ENCODE measurements at regions of chr7 and their contacts with region 1.

Region 1: GRCh38 chr7:1579481-1580421 is 9.9 kb upstream of the PSMG3 start:
- DNase-seq: peak; percentile 69

Region 2: DNA sequence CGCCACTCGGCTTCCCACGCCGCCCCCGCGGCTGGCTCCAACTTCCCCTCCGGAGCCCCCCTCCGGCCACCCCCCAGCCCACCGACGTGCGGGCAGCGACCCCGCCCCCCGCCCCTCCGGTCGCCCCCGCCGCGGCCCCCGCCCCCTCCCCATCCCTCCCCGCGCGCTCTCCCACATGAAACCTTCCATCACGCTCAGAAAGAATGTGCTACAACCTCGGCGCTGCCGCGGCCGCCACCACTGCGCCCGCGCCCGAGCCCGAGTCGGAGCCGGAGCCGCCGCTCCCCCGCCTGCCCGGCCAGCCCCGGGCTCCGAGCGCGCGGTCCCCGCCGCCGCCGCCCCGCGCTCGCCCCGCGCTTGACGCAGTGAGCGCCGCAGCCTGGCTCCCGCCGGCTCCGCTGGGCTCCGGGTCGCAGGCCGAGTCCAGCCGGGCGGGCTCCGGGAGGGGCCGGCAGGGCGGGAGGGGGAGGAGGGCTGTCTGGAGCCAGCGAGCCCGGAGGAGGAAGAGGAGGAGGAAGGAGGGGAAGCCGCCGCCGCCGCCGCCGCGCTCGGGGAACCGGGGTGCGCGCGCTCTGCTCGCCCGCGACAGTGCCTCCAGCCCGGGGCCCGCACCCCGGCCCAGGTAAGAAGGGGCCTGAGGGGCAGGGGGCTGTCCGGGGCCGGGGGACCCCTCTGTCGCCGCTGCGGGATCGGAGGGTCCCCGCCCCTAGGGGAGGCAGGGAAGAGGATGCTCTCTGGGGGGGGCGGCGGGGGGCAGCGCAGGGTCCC is 86.0 kb after region 1 on chr7:
- in situ Hi-C with region 1: no loop called
- DNase-seq: peak; percentile 31

Region 3: DNA sequence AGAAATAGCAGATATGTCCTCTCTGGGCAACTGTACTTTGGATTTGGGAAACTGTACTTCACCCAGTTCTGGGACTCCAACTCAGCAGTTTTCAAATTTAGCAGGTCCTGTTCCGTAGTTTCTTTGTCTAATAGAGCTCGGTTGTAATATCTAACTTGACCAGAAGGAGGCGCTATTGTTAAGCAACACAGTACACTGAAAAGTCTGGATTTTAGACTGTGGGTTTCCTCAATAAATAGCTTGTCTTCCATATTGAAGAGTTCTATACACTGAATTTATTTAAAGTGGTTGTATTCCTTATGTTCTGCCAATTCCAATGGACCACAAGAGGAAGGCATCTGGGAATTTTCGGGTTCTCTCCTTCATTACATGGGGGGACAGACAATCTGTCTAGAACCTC is 130.1 kb after region 1 on chr7:
- in situ Hi-C with region 1: loop called (anchors 25 kb)
- DNase-seq: no peak

Measured in ACHN (cell line).